ENCODE measurements at regions of chr7 and their contacts with region 1.

Region 1: DNA sequence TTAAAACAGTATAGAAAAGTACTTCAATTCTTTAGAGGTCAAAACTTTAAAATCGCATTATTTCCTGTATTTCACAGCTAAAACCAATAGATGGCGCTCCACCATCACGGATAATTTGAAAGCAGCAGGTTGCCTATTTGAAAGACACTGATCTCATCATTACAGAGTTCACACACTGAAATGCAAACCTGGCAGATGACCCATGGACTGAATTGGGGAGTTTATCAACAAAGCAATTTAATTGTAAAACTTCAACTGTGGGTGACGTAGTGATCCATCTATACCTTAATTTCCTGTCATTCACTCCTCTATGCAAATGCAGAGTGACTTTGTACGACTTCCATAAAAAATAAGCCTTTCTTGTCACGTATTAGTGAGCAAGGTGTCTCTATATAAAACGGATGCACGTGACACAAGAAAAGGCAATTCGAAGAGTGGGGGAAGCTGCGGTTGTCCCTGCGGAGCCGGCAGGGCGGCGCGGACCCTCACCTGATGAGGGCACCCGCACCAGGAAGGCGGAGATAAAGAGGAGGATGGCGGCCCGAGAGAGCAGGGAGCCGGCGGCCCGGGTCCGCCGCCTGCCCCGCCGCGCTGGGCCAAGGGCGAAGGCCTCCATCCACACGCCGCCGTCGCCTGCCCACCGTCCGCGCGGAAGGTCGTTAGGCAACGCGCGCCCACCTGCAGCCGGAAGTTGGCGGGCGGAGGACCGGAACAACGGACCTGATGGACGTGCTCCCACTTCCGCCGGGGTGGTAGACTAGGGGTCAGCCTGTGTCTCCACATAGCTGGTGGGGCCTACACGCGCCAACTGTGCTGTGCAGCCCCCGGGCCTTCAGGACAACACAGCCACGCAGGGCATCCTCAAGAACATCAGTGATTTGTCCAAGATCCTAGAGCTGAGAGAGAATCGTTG is at the start of gene ZPBP:
- DNase-seq: peak; percentile 76
- ATAC-seq: peak; percentile 81
- H3K4me3 Mint-ChIP-seq: peak within 1 kb of the TSS; percentile 84
- H3K27ac Mint-ChIP-seq: peak within 1 kb of the TSS; percentile 94
- H3K4me1 Mint-ChIP-seq: peaks cover 11% of the 10 kb centered on the region
- H3K27me3 Mint-ChIP-seq: no peaks in the 10 kb centered on the region
- total RNA-seq, gene ZPBP: not detected

Region 2: DNA sequence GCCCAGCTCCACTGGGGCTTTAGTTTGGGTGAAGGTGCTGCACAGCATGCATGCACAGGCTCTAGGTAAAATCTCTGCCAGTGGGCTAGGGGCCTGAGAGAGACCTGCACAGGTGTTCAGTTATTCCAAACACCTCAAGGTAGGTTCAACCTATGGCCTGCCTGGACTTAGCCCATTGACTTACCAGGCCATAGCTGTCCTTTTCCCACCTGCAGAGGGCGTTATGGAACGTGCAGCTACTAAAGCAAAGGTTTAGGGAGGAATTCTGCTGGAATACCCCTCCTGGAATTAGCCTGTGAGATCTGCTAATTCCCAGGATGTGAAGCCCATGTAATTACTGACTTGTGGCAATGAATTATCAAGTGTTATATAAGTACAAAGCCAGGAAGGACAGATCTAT is 315.8 kb before region 1 on chr7:
- CTCF ChIA-PET with region 1: no interaction called
- POLR2A ChIA-PET with region 1: no interaction called
- intact Hi-C with region 1: no loop called
- DNase-seq: no peak
- ATAC-seq: no peak
- H3K4me3 Mint-ChIP-seq: no peak overlapping the region
- H3K27ac Mint-ChIP-seq: no peak overlapping the region
- H3K4me1 Mint-ChIP-seq: peaks cover 6% of the 10 kb centered on the region
- H3K27me3 Mint-ChIP-seq: peaks cover 47% of the 10 kb centered on the region

Region 3: DNA sequence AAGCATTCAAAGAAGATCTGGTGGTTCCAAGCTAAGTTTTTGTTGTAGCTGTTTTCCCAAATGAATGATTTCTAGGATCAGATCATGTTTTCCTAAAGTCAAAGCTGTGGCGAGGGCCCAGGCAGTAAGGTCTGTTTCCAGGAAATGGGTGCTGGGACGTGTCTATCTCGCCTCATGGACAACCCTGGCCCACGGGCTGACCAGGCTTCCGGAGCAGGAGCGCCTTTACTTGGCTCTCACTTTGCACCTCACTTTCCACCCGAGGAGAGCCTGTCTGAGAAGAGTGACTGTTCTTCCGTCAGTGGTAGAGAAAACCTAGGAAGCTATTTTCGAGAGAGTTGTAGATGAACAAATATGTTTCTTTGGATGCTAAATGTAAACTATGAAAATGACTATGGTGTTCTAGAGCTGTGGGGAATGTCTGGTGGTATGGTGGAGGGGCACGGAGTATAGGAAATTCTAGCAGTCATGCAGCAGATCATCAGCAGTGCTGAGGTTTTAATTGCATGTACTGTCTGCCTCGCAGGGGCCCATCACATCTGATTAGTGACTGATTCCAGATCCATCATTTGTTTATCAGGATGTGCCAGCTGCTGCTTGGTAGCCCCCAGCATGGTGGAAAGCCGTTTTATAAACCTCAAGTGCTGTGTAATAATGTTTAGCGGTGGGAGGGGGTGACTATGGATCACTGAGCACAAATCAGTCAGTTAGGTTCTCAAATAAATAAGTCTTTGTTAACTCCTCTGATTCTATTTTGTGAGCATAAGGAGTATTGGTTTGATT is 252.8 kb before region 1 on chr7:
- CTCF ChIA-PET with region 1: no interaction called
- POLR2A ChIA-PET with region 1: no interaction called
- intact Hi-C with region 1: no loop called
- DNase-seq: no peak
- ATAC-seq: no peak
- H3K4me3 Mint-ChIP-seq: no peak overlapping the region
- H3K27ac Mint-ChIP-seq: no peak overlapping the region
- H3K4me1 Mint-ChIP-seq: no peaks in the 10 kb centered on the region
- H3K27me3 Mint-ChIP-seq: no peaks in the 10 kb centered on the region

Region 4: GRCh38 chr7:50142425-50143017 is 49.7 kb after region 1 on chr7:
- CTCF ChIA-PET with region 1: interaction called, 11 read pairs
- POLR2A ChIA-PET with region 1: no interaction called
- intact Hi-C with region 1: loop called (anchors 2 kb)
- DNase-seq: peak; percentile 51
- ATAC-seq: peak; percentile 63
- H3K4me3 Mint-ChIP-seq: peak overlapping the region; percentile 53
- H3K27ac Mint-ChIP-seq: peak overlapping the region; percentile 94
- H3K4me1 Mint-ChIP-seq: peaks cover 43% of the 10 kb centered on the region
- H3K27me3 Mint-ChIP-seq: no peaks in the 10 kb centered on the region

Region 5: GRCh38 chr7:50418086-50418515 is 325.3 kb after region 1 on chr7:
- CTCF ChIA-PET with region 1: interaction called, 52 read pairs
- POLR2A ChIA-PET with region 1: interaction called, 3 read pairs
- intact Hi-C with region 1: loop called (anchors 1 kb)
- DNase-seq: peak; percentile 89
- ATAC-seq: peak; percentile 96
- H3K4me3 Mint-ChIP-seq: no peak overlapping the region
- H3K27ac Mint-ChIP-seq: no peak overlapping the region
- H3K4me1 Mint-ChIP-seq: peaks cover 24% of the 10 kb centered on the region
- H3K27me3 Mint-ChIP-seq: no peaks in the 10 kb centered on the region

Region 6: DNA sequence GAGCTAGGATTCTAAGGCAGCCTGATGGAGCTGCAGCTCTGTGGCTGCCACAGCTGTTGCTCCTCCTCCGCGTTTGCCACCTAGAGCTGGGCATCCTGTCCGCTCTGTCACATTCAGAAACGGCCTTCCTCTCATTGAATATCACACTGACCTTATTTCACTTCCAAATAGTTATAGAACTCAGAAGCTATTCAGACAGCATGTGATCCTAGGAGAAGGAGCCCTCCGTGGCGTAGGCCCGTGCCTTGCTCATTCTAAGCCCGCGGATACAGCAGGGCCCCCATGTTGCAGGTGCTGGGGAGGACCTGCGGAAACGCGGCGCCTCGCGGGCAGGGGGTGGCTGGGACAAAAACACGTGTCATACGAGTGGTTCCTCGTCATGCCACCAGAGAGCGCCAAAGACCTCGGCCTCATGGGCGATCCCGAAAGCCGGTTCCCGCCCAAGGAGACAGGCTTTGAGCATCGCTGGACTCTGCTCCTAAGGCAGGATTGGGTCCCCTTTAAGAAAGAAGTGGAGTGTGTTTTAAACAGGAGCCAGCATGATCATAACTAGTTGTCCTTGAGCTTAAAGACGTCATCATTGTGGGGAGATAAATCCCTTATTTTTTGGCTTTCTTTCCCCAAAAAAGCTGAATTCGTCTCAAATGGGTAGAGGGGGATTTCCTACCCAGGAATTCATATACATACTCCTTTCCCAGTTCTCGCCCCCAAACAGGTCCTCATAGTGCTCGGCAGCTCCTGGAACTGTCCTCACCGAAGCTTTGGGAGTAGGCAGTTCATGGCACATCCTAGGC is 375.2 kb after region 1 on chr7:
- CTCF ChIA-PET with region 1: interaction called, 18 read pairs
- POLR2A ChIA-PET with region 1: no interaction called
- intact Hi-C with region 1: loop called (anchors 1 to 2 kb)
- DNase-seq: peak; percentile 92
- ATAC-seq: peak; percentile 95
- H3K4me3 Mint-ChIP-seq: peak overlapping the region; percentile 11
- H3K27ac Mint-ChIP-seq: peak overlapping the region; percentile 59
- H3K4me1 Mint-ChIP-seq: peaks cover 13% of the 10 kb centered on the region
- H3K27me3 Mint-ChIP-seq: peaks cover 5% of the 10 kb centered on the region

Region 7: DNA sequence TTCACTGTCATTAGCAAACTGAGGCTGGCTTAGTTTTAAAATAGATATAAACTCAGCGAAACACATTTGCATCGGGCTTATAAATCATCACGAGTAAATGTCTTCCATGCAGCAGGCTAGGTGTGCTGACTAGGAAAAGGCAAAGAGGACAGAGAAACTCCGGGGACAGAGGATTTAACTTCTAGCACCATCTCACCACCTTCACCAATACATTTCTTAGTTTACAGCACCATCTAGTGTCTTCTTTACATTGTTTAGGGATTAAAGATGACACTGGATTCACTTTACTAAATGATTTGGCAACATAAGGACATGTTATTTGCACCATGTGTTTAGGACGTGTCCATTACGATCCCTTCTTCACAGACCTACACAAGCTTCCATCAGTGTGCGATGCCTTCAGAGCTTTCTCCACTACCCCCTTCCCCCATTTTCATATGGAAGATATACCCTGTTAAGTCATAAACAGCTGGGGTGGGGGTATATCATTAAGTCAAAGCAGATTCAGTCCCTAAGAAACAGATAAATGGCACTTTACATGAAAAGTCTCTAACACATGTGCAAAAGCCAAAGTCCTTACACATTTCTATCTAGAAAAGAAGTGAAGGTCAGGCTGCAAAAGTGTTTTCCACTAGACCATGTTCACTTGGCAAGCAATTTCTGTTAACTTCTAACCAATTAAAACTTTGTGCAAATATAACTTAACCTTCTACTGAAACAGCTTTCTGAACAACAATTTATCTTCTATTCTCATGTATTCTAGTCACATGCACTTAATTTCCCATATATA is 586.6 kb after region 1 on chr7:
- CTCF ChIA-PET with region 1: interaction called, 10 read pairs
- POLR2A ChIA-PET with region 1: no interaction called
- intact Hi-C with region 1: loop called (anchors 1 to 2 kb)
- DNase-seq: no peak
- ATAC-seq: peak; percentile 78
- H3K4me3 Mint-ChIP-seq: no peak overlapping the region
- H3K27ac Mint-ChIP-seq: no peak overlapping the region
- H3K4me1 Mint-ChIP-seq: no peaks in the 10 kb centered on the region
- H3K27me3 Mint-ChIP-seq: no peaks in the 10 kb centered on the region

Region 8: DNA sequence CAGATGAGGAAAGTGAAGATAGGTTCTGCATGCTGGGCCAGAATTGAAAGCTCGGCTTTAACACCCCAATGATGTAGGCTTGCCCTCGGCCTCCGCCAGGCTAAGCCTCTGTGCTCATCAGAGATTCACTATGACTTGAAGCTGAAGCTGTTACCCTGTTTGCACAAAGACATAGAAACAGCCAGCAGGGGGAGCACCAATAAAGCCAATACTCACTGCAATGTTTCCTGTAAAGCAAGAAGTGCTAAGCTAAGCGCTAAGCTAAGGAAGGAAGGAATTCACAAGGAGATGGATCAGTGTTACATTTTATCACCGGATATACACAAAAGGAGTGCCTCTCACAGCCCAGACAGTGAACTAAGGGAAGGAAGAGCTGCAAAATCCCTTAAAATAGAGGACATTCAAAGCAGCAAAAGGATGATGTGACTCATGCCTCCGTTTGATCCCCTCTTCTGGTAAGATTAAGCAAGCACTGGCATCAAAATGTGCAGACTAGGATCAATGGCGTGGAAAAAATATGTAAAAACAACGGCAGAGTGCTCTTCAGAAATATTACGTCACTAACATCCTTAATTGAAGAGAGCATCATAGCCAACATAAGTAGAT is 1070.0 kb after region 1 on chr7:
- CTCF ChIA-PET with region 1: interaction called, 13 read pairs
- POLR2A ChIA-PET with region 1: no interaction called
- intact Hi-C with region 1: loop called (anchors 1 to 2 kb)
- DNase-seq: peak; percentile 89
- ATAC-seq: peak; percentile 96
- H3K4me3 Mint-ChIP-seq: no peak overlapping the region
- H3K27ac Mint-ChIP-seq: no peak overlapping the region
- H3K4me1 Mint-ChIP-seq: peaks cover 9% of the 10 kb centered on the region
- H3K27me3 Mint-ChIP-seq: peaks cover 6% of the 10 kb centered on the region

Measured in activated CD4-positive, alpha-beta T cell treated with anti-CD3 and anti-CD28 coated beads for 36 hours (primary cell).